Posterior vena cava (tissue), 2 donors: ENCODE measurements at regions of chr13 and their contacts with region 1.

Region 1: DNA sequence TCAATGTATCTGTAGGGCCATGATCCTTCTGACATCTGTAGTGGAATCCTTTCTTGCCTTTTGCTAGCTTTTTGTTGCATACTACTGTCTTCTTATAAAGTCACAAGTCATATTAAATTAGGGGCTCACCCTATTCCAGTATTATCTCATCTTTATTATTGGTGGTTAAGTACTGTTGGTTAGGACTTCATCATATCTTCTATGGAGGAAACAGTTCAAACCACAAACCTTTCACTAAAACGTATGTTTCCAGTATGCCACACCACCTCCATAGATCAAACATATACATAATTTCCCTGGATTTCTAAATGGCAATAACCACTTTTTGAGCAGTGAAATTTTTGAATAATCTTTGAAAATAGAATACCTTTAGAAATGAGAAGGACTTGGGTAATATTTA is 62.8 kb upstream of the PCDH9 start:
- DNase-seq: no peak

Region 2: DNA sequence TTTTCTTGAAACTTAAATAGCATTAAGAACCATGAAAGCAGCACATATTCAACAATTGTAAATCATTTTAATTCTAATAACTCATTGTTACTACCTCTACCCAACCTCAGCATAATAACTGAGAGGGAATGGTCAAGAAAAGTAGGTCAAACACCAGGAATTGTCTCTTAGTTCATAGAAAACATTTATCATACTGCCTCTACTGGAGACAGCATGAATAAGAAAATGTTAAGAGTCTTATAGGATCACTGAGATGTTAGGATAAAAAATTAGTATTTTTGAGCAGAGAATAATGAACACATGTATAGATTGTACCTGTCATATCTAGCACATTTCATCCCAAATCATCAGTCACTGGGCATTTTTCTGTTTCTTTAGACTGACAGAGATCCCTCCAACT is 578.1 kb before region 1 on chr13:
- intact Hi-C with region 1: no loop called
- DNase-seq: no peak

Region 3: DNA sequence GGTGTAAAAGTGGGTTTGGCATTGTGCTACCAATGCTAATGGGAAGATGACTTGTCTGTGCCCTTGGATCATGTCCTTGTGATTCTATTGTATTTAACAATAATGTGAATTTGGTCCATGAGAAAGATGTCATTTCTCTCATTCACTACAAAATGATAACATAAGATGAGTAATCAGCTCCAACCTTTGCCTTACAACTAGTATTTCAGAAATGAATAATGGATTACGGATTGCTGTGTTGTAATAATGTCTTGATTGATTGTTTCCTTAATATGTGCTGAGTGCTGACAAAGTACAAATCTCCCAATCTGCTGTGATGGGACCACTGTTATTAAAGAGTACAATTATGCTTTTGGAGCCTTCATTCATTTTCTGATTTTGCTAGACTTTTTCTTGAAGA is 437.8 kb before region 1 on chr13:
- intact Hi-C with region 1: no loop called
- DNase-seq: no peak

Region 4: GRCh38 chr13:67318398-67318797 is 25.5 kb after region 1 on chr13:
- intact Hi-C with region 1: loop called in 1 of 2 experiments (anchors 1 kb)
- DNase-seq: no peak